ENCODE measurements at regions of chr14 and their contacts with region 1.

Region 1: GRCh38 chr14:50008562-50009350 is 107.6 kb downstream of the VCPKMT start:
- DNase-seq: peak; percentile 94
- H3K4me3 ChIP-seq: no peak overlapping the region
- H3K27ac ChIP-seq: peak overlapping the region; percentile 96
- H3K4me1 ChIP-seq: peaks cover 55% of the 10 kb centered on the region
- H3K27me3 ChIP-seq: no peaks in the 10 kb centered on the region
- CTCF ChIP-seq: no peak

Region 2: GRCh38 chr14:49920935-49921334 is 87.8 kb before region 1 on chr14:
- CTCF ChIA-PET with region 1: no interaction called
- dilution Hi-C with region 1: no loop called
- in situ Hi-C with region 1: no loop called
- intact Hi-C with region 1: no loop called
- DNase-seq: no peak
- H3K4me3 ChIP-seq: no peak overlapping the region
- H3K27ac ChIP-seq: no peak overlapping the region
- H3K4me1 ChIP-seq: no peaks in the 10 kb centered on the region
- H3K27me3 ChIP-seq: no peaks in the 10 kb centered on the region
- CTCF ChIP-seq: no peak

Region 3: GRCh38 chr14:49951691-49952345 is 56.9 kb before region 1 on chr14:
- CTCF ChIA-PET with region 1: interaction called, 11 read pairs
- dilution Hi-C with region 1: no loop called
- in situ Hi-C with region 1: no loop called
- intact Hi-C with region 1: no loop called
- DNase-seq: no peak
- H3K4me3 ChIP-seq: no peak overlapping the region
- H3K27ac ChIP-seq: peak overlapping the region; percentile 95
- H3K4me1 ChIP-seq: peaks cover 50% of the 10 kb centered on the region
- H3K27me3 ChIP-seq: no peaks in the 10 kb centered on the region
- CTCF ChIP-seq: no peak

Region 4: GRCh38 chr14:50085570-50086320 is 77.0 kb after region 1 on chr14:
- CTCF ChIA-PET with region 1: no interaction called
- dilution Hi-C with region 1: no loop called
- in situ Hi-C with region 1: loop called in 1 of 2 experiments (anchors 10 kb)
- intact Hi-C with region 1: loop called (anchors 5 kb)
- DNase-seq: peak; percentile 78
- H3K4me3 ChIP-seq: no peak overlapping the region
- H3K27ac ChIP-seq: no peak overlapping the region
- H3K4me1 ChIP-seq: peaks cover 30% of the 10 kb centered on the region
- H3K27me3 ChIP-seq: no peaks in the 10 kb centered on the region
- CTCF ChIP-seq: no peak

Measured in mammary epithelial cell (primary cell).